Motor neuron (in vitro differentiated cells): ENCODE measurements at regions of chr9 and their contacts with region 1.

Region 1: GRCh38 chr9:5450359-5451091 is at the start of gene CD274:
- ATAC-seq: peak; percentile 96 to 100 (median 100)
- H3K4me3 ChIP-seq: peak within 1 kb of the TSS; percentile 14 to 33 (median 23)
- H3K27ac ChIP-seq: no peak within 1 kb of the TSS
- H3K4me1 ChIP-seq: no peaks in the 10 kb centered on the region
- total RNA-seq, gene CD274: 0.16 to 2.0 (median 0.70) TPM

Region 2: GRCh38 chr9:5566054-5566618 is 115.6 kb after region 1 on chr9:
- in situ Hi-C with region 1: no loop called
- ATAC-seq: peak in 1 of 8 experiments; percentile 25
- H3K4me3 ChIP-seq: no peak overlapping the region
- H3K27ac ChIP-seq: no peak overlapping the region
- H3K4me1 ChIP-seq: peaks cover 15 to 21% of the 10 kb centered on the region in 2 donors

Region 3: DNA sequence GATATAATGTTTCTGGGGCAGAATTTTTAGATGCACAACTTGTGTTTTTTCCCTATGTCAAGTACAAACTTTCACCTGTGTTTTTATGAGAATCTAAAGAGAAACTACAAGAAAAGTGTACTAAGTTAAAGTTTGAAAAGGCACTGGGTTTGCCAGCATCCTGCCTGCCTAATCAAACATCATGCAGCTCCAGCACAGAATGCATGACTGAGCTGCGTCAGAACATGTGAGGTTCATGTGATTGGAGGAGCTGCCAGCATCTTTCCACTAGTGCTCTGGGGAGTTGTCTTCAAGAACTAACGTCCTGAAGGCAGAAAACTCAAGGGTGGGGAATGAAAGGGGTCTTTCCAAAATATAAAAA is 132.3 kb after region 1 on chr9:
- in situ Hi-C with region 1: loop called in 2 of 9 experiments (anchors 25 kb)
- ATAC-seq: peak in 5 of 8 experiments; percentile 41 to 79 (median 69)
- H3K4me3 ChIP-seq: no peak overlapping the region
- H3K27ac ChIP-seq: no peak overlapping the region
- H3K4me1 ChIP-seq: no peaks in the 10 kb centered on the region